Tibial artery (tissue), 4 donors: ENCODE measurements at regions of chr22 and their contacts with region 1.

Region 1: GRCh38 chr22:21938071-21938822 is 14.4 kb downstream of the PPM1F start:
- DNase-seq: peak; percentile 92 to 96
- H3K4me3 ChIP-seq: peak overlapping the region; percentile 60 to 74
- H3K27ac ChIP-seq: peak overlapping the region; percentile 87 to 89
- H3K4me1 ChIP-seq: peaks cover 7 to 53% (median 42%) of the 10 kb centered on the region in 4 donors
- H3K27me3 ChIP-seq: no peaks in the 10 kb centered on the region
- CTCF ChIP-seq: peak; percentile 94 to 99

Region 2: DNA sequence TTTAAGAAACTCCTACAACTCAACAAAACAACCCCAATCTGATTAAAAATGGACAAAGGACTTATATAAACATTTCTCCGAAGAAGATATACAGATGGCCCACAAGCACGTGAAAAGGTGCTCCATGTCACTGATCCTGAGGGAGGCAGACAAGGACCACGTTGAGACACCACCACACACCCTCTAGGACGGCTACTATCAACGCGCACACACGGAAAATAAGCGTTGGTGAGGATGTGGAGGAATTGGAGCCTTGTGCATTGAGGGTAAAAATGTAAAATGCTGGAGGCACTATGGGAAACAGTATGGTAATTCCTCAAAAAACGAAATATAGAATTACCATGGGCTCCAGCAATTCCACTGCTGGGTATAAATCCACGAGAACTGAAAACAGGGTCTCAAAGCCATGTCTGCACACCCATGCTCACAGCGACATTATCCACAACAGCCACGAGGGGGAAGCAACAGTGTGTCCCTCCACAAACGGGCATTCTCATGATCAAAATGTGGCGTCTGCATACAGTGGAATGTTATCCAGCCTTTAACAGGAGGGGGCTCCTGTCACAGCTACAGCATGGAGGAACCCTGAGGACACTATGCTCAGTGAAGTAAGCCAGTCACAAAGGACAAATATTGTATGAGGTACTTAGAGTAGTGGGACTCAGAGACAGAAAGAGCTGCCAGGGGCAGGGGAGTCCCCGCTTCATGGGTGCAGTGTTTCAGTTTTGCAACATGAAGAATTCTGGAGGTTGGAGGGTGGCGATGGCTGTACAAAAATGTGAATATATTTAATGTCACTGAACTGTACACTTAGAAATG is 225.1 kb before region 1 on chr22:
- intact Hi-C with region 1: loop called (anchors 2 kb)
- DNase-seq: peak; percentile 71 to 80
- H3K4me3 ChIP-seq: no peak overlapping the region
- H3K27ac ChIP-seq: peak overlapping the region in 1 of 2 donors; percentile 22
- H3K4me1 ChIP-seq: peaks cover 0 to 4% (median 2%) of the 10 kb centered on the region in 4 donors
- H3K27me3 ChIP-seq: no peaks in the 10 kb centered on the region
- CTCF ChIP-seq: peak; percentile 78 to 91

Region 3: DNA sequence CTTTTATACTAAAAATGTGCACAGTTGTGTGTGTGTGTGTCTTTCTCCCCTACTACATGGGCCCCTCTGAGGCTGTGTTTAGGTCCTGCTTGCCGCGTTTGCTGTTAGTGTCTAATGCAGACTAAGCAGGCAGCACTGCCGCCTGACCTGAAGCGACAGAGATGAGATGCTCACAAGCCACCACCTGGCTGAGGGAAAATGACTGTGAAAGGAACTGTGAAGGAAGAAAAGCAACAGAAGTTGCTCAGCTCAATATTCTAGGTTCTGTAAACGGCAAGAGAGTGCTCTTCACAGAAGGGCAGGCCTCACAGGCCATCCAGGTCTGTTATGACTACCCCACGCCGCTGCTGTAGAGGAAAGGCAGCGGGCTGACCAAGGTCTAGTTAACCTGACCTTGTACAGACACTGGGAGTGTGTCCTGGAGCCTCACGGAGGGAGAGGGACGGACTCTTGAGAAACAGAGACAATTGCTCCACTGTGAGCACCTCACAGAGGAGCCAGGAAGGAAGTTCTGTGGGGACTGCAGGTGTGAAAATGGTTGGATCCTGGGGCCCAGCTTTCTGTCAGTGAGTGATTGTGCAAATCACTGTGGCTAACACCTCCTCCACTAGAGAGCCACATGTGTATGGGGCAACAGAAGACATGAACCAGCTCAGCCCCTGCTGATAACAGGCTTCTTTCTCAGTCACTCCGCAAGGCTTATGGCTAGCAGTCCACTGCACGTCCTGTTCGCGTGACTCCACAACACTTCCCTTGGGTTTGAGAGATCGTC is 171.4 kb before region 1 on chr22:
- intact Hi-C with region 1: no loop called
- DNase-seq: no peak
- H3K4me3 ChIP-seq: no peak overlapping the region
- H3K27ac ChIP-seq: no peak overlapping the region
- H3K4me1 ChIP-seq: no peaks in the 10 kb centered on the region
- H3K27me3 ChIP-seq: no peaks in the 10 kb centered on the region
- CTCF ChIP-seq: no peak

Region 4: DNA sequence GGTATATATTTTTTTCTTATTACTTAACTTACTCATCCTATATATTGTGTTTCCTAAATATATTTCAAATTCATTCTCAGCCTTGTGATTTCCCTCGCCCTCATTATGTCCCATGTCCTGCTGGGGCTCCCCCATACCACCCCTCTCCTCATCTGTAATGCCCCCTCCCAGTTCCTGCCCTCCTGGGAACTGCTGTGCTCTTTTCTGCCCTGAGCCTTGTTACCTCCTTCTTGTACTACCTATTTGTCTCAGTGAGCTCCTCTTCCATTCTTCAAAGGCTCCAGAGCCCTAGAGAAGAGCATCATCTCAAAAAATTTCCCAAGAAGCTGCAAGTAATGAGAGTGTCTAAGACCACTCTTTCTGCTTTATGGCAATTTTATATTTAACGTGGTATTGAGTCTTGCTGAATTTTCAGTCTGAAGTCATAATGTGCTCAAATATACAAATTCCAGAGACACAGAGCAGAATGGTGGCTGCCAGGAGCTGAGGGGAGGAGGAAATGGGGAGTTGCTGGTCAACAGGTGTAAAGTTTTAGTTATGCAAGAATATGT is 110.8 kb after region 1 on chr22:
- intact Hi-C with region 1: no loop called
- DNase-seq: no peak
- H3K4me3 ChIP-seq: no peak overlapping the region
- H3K27ac ChIP-seq: no peak overlapping the region
- H3K4me1 ChIP-seq: no peaks in the 10 kb centered on the region
- H3K27me3 ChIP-seq: no peaks in the 10 kb centered on the region
- CTCF ChIP-seq: no peak

Region 5: DNA sequence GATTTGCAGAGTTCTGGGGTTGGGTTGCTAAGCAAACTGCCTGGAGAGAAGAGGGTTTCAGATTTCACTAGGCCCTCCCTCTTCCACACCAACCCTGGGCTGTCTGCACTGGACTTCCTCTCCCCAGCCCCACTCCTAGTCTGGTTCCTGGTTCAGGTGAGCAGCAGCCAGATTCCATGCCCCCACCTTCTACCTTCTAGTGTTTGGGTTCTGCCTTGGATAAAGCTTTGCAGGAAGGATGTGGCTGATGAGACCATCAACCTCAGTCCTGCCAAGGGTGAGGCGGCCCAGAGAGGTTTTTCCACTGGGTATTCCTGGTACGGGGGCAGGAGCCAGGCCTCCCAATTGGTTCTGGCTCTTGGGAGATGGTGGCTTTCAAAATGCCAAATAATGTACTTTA is 1310.3 kb after region 1 on chr22:
- intact Hi-C with region 1: loop called (anchors 5 kb)
- DNase-seq: no peak
- H3K4me3 ChIP-seq: no peak overlapping the region
- H3K27ac ChIP-seq: peak overlapping the region; percentile 9 to 42
- H3K4me1 ChIP-seq: peaks cover 0 to 69% (median 40%) of the 10 kb centered on the region in 4 donors
- H3K27me3 ChIP-seq: no peaks in the 10 kb centered on the region
- CTCF ChIP-seq: no peak